Lower lobe of right lung (tissue), 2 donors: ENCODE measurements at regions of chr13 and their contacts with region 1.

Region 1: DNA sequence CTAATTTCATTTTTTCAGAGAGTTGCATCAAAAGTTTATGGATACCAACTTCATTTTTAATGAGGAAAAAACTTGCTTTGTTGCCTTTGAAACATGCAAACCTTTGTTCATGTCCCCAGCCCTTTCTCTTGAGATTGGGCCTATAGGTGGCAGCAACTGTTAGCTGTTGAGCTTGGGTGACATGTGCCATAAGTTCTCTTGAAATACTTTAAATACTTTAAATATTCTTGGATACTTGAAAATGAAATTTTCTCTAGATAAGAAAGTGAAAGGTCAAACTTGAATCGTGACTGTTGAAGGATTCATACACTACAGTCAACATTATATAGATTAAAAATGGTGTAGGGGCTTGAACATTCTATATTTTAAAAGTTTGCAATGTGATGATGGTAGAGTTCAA is 294.9 kb downstream of the NDFIP2 start:
- DNase-seq: no peak
- ATAC-seq: peak; percentile 82 to 89
- H3K4me3 ChIP-seq: no peak overlapping the region
- H3K27ac ChIP-seq: no peak overlapping the region
- H3K4me1 ChIP-seq: peaks cover 12% of the 10 kb centered on the region
- H3K27me3 ChIP-seq: no peaks in the 10 kb centered on the region
- CTCF ChIP-seq: peak; percentile 56

Region 2: GRCh38 chr13:80338781-80339562 is 563.1 kb after region 1 on chr13:
- intact Hi-C with region 1: loop called (anchors 10 kb)
- DNase-seq: peak; percentile 86
- ATAC-seq: peak; percentile 48 to 57
- H3K4me3 ChIP-seq: peak overlapping the region; percentile 73
- H3K27ac ChIP-seq: peak overlapping the region; percentile 98
- H3K4me1 ChIP-seq: peaks cover 47% of the 10 kb centered on the region
- H3K27me3 ChIP-seq: no peaks in the 10 kb centered on the region
- CTCF ChIP-seq: peak; percentile 28